PC-3 (cell line): ENCODE measurements at regions of chr21 and their contacts with region 1.

Region 1: GRCh38 chr21:33199516-33200217 is 30.1 kb upstream of the IFNAR2 start:
- DNase-seq: peak; percentile 95
- ATAC-seq: peak; percentile 60
- H3K4me3 ChIP-seq: no peak overlapping the region
- H3K27ac ChIP-seq: no peak overlapping the region
- H3K4me1 ChIP-seq: peaks cover 22% of the 10 kb centered on the region
- H3K27me3 ChIP-seq: no peaks in the 10 kb centered on the region
- CTCF ChIP-seq: peak; percentile 93

Region 2: GRCh38 chr21:32940079-32941014 is 259.3 kb before region 1 on chr21:
- CTCF ChIA-PET with region 1: interaction called, 7 read pairs
- POLR2A ChIA-PET with region 1: no interaction called
- intact Hi-C with region 1: loop called (anchors 1 kb)
- DNase-seq: peak; percentile 69
- ATAC-seq: peak; percentile 80; the same call in 1 of the 2 replicates
- H3K4me3 ChIP-seq: no peak overlapping the region
- H3K27ac ChIP-seq: no peak overlapping the region
- H3K4me1 ChIP-seq: no peaks in the 10 kb centered on the region
- H3K27me3 ChIP-seq: peaks cover 68% of the 10 kb centered on the region
- CTCF ChIP-seq: peak; percentile 90

Region 3: DNA sequence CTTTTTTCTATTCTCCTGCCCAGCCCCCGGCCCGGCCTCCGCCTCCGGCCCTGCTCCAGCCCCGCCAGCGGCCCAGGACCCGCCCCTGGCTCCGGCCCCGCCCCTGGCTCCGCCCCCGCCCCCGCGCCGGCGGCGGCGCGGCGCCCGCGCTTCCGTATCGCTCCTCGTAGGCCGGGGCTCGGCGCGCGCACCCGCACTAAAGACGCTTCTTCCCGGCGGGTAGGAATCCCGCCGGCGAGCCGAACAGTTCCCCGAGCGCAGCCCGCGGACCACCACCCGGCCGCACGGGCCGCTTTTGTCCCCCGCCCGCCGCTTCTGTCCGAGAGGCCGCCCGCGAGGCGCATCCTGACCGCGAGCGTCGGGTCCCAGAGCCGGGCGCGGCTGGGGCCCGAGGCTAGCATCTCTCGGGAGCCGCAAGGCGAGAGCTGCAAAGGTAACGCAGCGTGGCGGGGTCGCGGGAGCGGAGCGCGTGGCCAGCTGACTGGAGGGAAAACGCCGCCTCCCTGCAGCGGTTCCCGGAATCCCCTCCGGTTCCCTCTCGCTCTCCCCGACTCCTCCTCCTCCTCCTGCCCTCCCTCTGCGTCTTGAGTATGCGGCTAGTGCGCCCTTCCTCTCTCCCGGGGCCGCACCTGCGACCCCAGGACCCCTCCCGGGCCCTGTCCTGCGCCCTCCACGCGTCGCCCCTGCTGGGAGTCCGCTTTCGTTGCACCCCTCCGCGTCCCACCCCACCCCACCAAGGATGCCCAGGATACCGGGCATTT is 30.3 kb after region 1 on chr21 and contains the start of gene IFNAR2:
- CTCF ChIA-PET with region 1: interaction called, 3 read pairs
- POLR2A ChIA-PET with region 1: no interaction called
- intact Hi-C with region 1: loop called (anchors 1 kb)
- DNase-seq: peak; percentile 67
- ATAC-seq: peak; percentile 91
- H3K4me3 ChIP-seq: peak within 1 kb of the TSS; percentile 88
- H3K27ac ChIP-seq: peak within 1 kb of the TSS; percentile 12
- H3K4me1 ChIP-seq: peaks cover 20% of the 10 kb centered on the region
- H3K27me3 ChIP-seq: no peaks in the 10 kb centered on the region
- CTCF ChIP-seq: no peak
- total RNA-seq, gene IFNAR2: 2.1 and 7.1 TPM in 2 replicates

Region 4: GRCh38 chr21:33286600-33287456 is 87.2 kb after region 1 on chr21:
- CTCF ChIA-PET with region 1: no interaction called
- POLR2A ChIA-PET with region 1: no interaction called
- intact Hi-C with region 1: no loop called
- DNase-seq: peak; percentile 82
- ATAC-seq: peak; percentile 87
- H3K4me3 ChIP-seq: peak overlapping the region; percentile 21; the same call in 1 of the 2 replicates
- H3K27ac ChIP-seq: peak overlapping the region; percentile 55
- H3K4me1 ChIP-seq: peaks cover 15% of the 10 kb centered on the region
- H3K27me3 ChIP-seq: no peaks in the 10 kb centered on the region
- CTCF ChIP-seq: no peak

Region 5: DNA sequence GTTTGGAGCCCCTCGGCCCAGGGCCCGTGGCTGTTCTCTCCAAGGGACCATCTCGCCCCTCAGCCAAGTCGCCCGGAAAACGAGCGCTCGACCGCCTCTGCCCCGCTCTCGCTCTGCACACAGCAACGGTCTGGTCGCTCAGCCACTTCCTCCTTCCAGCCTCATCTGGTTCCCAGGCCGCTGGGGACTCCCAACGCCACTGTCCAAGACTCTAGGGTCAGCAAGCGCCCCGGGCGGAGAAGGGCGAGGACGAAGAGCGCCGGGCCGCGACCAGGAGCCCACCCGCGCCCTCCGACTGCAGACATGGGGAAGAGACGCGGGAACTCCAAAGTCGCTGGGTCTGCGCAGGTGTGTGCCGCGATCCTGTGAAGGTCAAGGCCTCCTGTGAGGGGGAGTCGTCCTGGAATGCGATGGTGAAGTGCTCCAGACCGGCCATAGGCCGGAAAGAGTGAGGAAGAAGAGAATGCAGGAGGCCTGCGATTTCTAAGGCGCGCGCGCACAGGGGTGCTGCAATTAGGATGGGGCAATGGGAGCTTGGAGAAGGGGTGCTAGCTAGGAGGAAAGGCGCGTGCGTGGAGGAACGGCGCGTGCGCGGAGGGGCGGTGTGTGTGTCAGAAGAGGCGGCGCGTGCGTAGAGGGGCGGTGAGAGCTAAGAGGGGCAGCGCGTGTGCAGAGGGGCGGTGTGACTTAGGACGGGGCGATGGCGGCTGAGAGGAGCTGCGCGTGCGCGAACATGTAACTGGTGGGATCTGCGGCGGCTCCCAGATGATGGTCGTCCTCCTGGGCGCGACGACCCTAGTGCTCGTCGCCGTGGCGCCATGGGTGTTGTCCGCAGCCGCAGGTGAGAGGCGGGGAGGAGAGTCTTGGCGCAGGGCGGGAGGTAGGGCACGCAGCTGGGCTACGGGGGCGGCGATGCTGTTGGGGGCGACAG is 124.9 kb after region 1 on chr21 and contains the start of gene IFNAR1:
- CTCF ChIA-PET with region 1: interaction called, 11 read pairs
- POLR2A ChIA-PET with region 1: interaction called, 7 read pairs
- intact Hi-C with region 1: loop called (anchors 1 kb)
- DNase-seq: peak; percentile 94
- ATAC-seq: peak; percentile 90
- H3K4me3 ChIP-seq: peak within 1 kb of the TSS; percentile 93
- H3K27ac ChIP-seq: peak within 1 kb of the TSS; percentile 74
- H3K4me1 ChIP-seq: peaks cover 7% of the 10 kb centered on the region; the same call in 1 of the 2 replicates
- H3K27me3 ChIP-seq: no peaks in the 10 kb centered on the region
- CTCF ChIP-seq: no peak
- total RNA-seq, gene IFNAR1: 13.2 and 18.4 TPM in 2 replicates

Region 6: DNA sequence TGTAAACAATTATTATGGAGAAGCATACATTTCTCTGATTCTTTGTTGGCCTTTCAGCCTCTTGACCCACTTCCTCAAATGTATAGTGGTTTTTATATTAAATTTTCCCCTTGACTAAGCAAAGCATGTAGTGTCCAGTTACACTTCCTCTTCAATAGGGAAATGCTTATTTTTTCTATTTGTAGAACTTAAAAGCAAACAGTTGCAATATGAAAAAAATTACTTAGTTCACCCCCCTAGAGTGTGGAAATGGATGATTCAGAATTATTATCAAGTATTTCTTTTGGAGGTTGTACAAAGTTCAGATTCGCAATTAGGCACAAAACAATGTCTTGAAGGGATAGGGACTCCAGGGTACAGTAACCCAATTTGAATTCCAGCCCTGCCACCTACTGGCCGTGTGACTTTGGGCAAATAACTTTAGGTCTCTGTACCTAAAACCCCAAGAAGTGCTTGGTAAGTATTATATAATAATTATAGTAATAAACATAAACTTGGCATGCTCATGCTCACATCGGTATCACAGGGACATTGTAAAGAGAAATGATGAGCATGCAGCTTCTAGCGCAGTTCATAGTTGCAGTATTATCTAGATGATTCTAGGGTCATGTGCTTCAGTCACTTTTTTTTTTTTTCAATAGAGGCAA is 174.9 kb after region 1 on chr21:
- CTCF ChIA-PET with region 1: interaction called, 6 read pairs
- POLR2A ChIA-PET with region 1: no interaction called
- intact Hi-C with region 1: loop called (anchors 1 kb)
- DNase-seq: peak; percentile 90
- ATAC-seq: peak; percentile 87
- H3K4me3 ChIP-seq: peak overlapping the region; percentile 31; the same call in 1 of the 2 replicates
- H3K27ac ChIP-seq: peak overlapping the region; percentile 93
- H3K4me1 ChIP-seq: peaks cover 28% of the 10 kb centered on the region
- H3K27me3 ChIP-seq: no peaks in the 10 kb centered on the region
- CTCF ChIP-seq: peak; percentile 85

Region 7: GRCh38 chr21:33441489-33442477 is 242.1 kb after region 1 on chr21:
- CTCF ChIA-PET with region 1: interaction called, 19 read pairs
- POLR2A ChIA-PET with region 1: interaction called, 5 read pairs
- intact Hi-C with region 1: loop called (anchors 1 kb)
- DNase-seq: peak; percentile 91
- ATAC-seq: peak; percentile 92
- H3K4me3 ChIP-seq: no peak overlapping the region
- H3K27ac ChIP-seq: peak overlapping the region; percentile 93
- H3K4me1 ChIP-seq: peaks cover 21% of the 10 kb centered on the region
- H3K27me3 ChIP-seq: no peaks in the 10 kb centered on the region
- CTCF ChIP-seq: no peak